ENCODE measurements at regions of chr1 and their contacts with region 1.

Region 1: DNA sequence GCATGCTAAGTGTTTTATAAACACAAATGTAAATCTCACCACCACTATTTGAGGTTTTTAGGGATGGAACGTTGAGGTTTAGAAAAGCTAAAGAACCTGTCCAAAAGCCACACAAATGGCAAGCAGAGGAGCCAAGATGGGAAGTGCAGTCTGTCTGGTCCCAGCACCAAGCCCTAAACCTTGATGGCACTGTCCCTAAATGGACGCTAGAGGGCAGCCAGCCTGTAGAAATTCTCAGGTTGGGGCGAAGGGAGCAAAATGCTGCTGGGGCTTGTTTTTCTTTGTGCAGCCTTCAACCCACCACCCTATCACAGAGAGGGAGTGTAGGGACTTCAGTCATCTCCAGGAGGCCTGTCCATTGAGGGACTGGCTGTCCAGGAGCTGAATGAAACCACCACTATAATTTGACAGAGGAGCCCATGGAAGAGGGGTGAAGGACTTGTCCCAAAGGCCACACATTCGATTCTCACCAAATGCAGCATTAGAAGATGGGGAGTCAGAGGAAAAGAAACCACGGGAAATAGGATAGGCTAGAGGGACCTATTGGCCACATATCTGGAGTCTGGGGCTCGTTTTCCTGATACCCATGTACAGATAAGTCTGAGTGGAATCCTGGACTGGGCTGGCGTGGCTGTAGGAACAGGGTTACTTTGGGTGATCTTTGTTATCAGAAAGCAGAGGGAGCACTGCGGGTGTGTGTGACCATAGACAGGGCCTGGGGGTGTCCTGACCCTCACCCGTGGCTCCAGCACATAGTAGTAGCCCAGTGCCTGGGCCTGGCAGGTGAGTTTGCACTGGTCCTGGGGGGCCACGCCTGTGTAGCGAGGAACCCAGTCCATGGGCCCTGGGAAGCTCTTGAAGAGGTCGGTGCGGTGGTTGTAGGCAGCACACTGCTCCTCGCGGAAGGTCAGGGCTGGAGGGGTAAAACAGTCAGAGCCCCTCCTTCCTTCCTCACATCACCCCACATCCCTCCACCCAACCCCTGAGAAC is 6.1 kb downstream of the ADAMTS4 start:
- DNase-seq: peak; percentile 86
- H3K4me3 ChIP-seq: no peak overlapping the region
- H3K27ac ChIP-seq: no peak overlapping the region
- H3K4me1 ChIP-seq: peaks cover 28% of the 10 kb centered on the region
- CTCF ChIP-seq: peak; percentile 96

Region 2: DNA sequence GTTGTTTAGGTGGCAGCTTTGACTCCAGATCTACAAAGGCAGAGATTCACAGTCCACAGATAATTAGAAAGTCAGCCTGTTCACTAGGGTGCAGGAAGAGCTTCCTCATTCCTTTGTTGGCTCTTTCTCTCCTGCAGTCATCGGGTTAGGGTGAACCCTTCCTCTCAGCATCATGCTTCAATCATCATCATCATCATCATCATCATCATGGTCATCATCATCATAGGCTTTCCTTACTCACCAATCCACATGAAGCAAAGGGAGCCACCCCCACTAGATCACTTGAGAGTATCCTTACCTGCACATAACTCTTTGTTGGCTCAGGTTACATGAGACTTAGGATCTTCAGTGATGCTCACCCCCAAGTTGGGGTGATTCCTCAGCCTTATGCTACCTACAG is 98.0 kb after region 1 on chr1:
- CTCF ChIA-PET with region 1: no interaction called
- POLR2A ChIA-PET with region 1: interaction called, 3 read pairs
- intact Hi-C with region 1: loop called (anchors 1 kb)
- DNase-seq: no peak
- H3K4me3 ChIP-seq: no peak overlapping the region
- H3K27ac ChIP-seq: no peak overlapping the region
- H3K4me1 ChIP-seq: no peaks in the 10 kb centered on the region
- CTCF ChIP-seq: no peak